ENCODE measurements at regions of chr20 and their contacts with region 1.

Region 1: DNA sequence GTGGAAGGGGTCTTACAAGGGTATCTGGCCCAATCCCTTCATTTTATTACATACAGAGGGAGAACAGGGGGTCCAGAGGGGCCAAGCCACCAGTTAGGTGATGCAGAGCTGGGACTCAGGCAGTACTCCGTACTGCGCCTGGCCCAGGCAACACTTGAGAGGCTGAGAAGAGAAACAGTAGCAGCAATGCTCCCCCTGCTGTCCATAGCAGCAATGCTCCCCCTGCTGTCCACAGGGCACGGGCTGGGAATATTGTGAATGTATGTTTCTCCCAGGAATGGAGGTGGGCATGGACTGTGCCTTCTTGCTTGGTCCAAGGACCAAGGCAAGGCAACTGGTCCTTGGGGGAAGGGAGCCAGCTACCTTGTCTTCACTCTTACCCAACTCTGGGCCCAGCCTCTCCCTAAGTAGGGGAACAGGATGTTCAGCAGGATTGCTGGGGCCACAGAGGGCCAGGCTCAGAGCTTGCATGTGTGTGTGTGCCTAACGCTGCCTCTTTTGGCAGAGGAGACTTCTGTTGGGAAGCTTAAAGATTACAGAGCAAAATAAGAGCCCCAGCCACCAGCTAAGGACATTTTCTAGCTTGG is 14.8 kb upstream of the FAM83C start:
- DNase-seq: no peak
- H3K4me3 ChIP-seq: no peak overlapping the region
- H3K27ac ChIP-seq: peak overlapping the region; percentile 75
- H3K4me1 ChIP-seq: peaks cover 64% of the 10 kb centered on the region
- H3K27me3 ChIP-seq: no peaks in the 10 kb centered on the region
- CTCF ChIP-seq: peak in 2 of 3 experiments; percentile 14 to 20
- POLR2A ChIP-seq: no peak

Region 2: GRCh38 chr20:35447082-35447789 is 140.2 kb after region 1 on chr20:
- intact Hi-C with region 1: loop called (anchors 5 kb)
- DNase-seq: no peak
- H3K4me3 ChIP-seq: peak overlapping the region; percentile 30 to 35
- H3K27ac ChIP-seq: no peak overlapping the region
- H3K4me1 ChIP-seq: peaks cover 6% of the 10 kb centered on the region
- H3K27me3 ChIP-seq: no peaks in the 10 kb centered on the region
- CTCF ChIP-seq: peak; percentile 78 to 90 (median 82)
- POLR2A ChIP-seq: no peak

Measured in vagina (tissue), 2 donors.